HEK293 (cell line): ENCODE measurements at regions of chr1 and their contacts with region 1.

Region 1: GRCh38 chr1:91529856-91530255 is 29.2 kb downstream of the CDC7 start:
- H3K4me3 ChIP-seq: no peak overlapping the region
- H3K27ac ChIP-seq: no peak overlapping the region
- H3K4me1 ChIP-seq: no peaks in the 10 kb centered on the region
- CTCF ChIP-seq: peak; percentile 45; the same call in 1 of the 2 replicates

Region 2: DNA sequence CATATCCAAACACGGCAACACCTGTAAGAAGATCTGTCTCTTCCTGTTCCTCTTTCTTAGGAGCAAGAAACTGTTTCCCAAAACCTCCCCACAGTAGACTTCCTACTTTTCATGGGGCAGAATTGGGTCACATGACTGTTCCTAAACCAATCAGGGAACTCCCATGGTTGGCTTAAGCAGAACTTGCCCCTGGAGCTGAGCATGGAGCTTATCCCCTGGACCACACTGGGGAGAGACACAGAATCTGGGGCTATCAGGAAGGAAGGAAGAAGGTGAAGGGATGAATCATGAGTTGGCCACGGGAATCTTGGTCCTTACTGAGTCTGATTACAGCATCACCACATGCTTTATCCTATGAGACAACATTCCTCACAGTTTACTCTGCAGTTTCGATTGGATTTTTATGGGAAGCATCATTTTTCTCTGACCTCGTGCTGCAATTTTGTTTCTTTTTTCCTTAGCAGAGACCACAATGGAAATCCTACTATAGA is 52.6 kb after region 1 on chr1:
- CTCF ChIA-PET with region 1: no interaction called
- POLR2A ChIA-PET with region 1: no interaction called
- H3K4me3 ChIP-seq: no peak overlapping the region
- H3K27ac ChIP-seq: no peak overlapping the region
- H3K4me1 ChIP-seq: no peaks in the 10 kb centered on the region
- CTCF ChIP-seq: no peak

Region 3: DNA sequence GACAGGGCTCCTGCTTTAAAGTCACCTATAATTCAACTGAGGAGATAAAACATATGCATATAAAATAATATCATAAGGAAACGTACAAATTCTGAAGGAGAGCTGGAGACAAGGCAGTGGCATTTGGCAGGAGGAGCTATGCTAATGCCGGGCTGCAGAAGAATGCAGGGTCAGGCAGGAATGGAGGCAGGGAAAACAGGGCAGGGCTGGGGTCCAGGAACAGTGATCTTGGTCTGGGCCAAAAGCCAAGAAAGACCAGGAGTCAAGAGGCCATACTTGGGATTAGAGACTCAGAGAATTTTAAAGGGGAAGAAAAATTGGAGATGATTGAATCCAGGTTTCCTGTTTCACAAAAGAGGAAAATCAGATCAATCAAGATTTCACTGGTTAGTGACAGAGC is 399.4 kb after region 1 on chr1:
- CTCF ChIA-PET with region 1: interaction called, 23 read pairs
- POLR2A ChIA-PET with region 1: no interaction called
- H3K4me3 ChIP-seq: no peak overlapping the region
- H3K27ac ChIP-seq: no peak overlapping the region
- H3K4me1 ChIP-seq: no peaks in the 10 kb centered on the region
- CTCF ChIP-seq: no peak